ENCODE measurements at regions of chr7 and their contacts with region 1.

Region 1: GRCh38 chr7:27046854-27047549 is 48.8 kb downstream of the HOXA1 start:
- DNase-seq: no peak
- H3K4me3 Mint-ChIP-seq: no peak overlapping the region
- H3K27ac Mint-ChIP-seq: peak overlapping the region; percentile 42
- H3K4me1 Mint-ChIP-seq: peaks cover 11% of the 10 kb centered on the region
- H3K27me3 Mint-ChIP-seq: no peaks in the 10 kb centered on the region
- CTCF ChIP-seq: no peak

Region 2: GRCh38 chr7:27062946-27063345 is 15.9 kb after region 1 on chr7:
- CTCF ChIA-PET with region 1: interaction called, 10 read pairs
- intact Hi-C with region 1: no loop called
- DNase-seq: no peak
- H3K4me3 Mint-ChIP-seq: no peak overlapping the region
- H3K27ac Mint-ChIP-seq: no peak overlapping the region
- H3K4me1 Mint-ChIP-seq: peaks cover 15% of the 10 kb centered on the region
- H3K27me3 Mint-ChIP-seq: no peaks in the 10 kb centered on the region
- CTCF ChIP-seq: no peak

Region 3: DNA sequence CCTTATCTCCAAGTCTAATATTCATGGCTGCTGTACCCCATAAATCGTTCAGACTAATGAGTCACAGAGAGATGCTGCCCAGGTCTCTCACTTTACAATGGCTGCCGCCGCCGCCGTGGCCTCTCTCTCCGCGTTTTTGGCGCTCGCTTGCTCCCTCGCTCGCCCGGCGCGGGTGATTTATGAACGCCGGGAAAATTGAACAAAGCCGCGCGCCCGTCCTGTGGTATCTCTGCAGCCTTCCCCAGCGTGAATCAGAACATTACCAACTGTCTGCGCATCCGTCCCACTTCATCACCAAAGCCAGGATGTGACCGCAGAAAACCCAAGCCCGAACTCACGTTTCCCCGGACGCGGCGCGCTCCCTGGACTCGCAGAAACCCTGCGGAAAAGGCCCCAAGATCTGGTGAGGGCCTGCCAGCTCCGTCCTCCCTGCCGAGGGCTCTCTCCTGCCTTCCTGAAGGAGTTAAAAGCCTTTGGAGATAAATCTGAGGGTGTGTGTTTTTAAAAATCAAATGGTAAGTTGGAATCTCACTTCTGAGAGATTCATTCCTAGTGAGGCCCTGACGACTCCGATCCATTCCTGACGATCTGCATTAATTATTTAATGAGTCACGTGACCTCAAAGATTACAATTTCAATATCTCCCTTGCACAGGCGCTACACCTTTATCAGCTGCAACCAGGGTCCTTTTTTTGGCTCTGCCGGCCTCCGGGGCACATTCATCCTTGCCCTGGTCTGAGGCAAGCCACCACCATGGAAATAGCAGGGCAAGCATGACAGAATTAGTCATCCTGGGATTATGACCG is 77.3 kb after region 1 on chr7:
- CTCF ChIA-PET with region 1: no interaction called
- intact Hi-C with region 1: loop called (anchors 5 kb)
- DNase-seq: no peak
- H3K4me3 Mint-ChIP-seq: peak overlapping the region; percentile 83
- H3K27ac Mint-ChIP-seq: no peak overlapping the region
- H3K4me1 Mint-ChIP-seq: peaks cover 63% of the 10 kb centered on the region
- H3K27me3 Mint-ChIP-seq: no peaks in the 10 kb centered on the region
- CTCF ChIP-seq: no peak

Region 4: GRCh38 chr7:27150568-27151340 is 103.8 kb after region 1 on chr7:
- CTCF ChIA-PET with region 1: interaction called, 14 read pairs
- intact Hi-C with region 1: no loop called
- DNase-seq: peak; percentile 91
- H3K4me3 Mint-ChIP-seq: peak overlapping the region; percentile 76
- H3K27ac Mint-ChIP-seq: peak overlapping the region; percentile 73
- H3K4me1 Mint-ChIP-seq: peaks cover 11% of the 10 kb centered on the region
- H3K27me3 Mint-ChIP-seq: peaks cover 36% of the 10 kb centered on the region
- CTCF ChIP-seq: peak; percentile 96